Activated T-helper 2 cell treated with anti-CD3 and anti-CD28 coated beads, Interferon-gamma antibody, Interleukin-2, Interleukin-4, amounts not matched to agents 10 μg/mL and 5 μg/mL and 100 μg/mL, durations not matched to agents 14 hours and 24 hours and 36 hours (primary cell): ENCODE measurements at regions of chr7 and their contacts with region 1.

Region 1: DNA sequence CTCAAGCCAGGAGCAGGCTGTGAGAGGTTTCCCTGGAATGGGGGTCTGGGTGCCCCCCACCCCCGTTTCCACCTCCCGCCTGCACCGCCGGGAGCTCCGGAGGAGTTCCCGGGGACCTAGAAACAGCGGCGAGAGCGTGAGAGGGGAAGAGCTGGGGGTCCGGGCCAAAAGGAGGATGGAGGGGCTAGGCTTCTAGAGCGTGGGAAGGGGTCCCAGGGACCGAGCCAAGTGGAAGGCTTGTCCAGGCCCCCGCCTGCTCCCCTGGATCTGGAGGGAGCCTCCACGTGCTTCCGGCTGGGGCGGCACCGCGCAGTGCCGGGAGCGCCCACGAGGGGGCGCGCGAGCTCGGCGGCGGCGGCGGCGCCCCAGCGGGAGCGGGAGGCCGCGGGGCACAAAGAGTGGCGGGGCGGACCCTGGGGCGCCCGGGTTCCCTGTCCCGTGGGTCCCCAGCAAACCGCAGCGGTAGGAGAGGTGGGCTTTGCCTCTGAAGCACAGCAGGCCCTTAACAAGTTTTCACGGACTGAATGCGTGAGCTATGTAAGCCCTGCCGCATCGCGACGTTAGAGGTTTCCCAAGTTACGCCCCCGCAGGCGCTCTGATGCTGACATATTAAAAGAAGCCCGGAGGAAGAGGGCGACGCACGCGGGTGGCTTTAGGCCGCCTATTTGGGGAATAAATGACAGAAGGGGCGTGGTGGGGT is 104.4 kb upstream of the LRRC4 start:
- DNase-seq: peak; percentile 51
- H3K4me3 Mint-ChIP-seq: peak overlapping the region; percentile 68
- H3K27ac Mint-ChIP-seq: peak overlapping the region; percentile 14
- H3K4me1 Mint-ChIP-seq: peaks cover 7% of the 10 kb centered on the region
- H3K27me3 Mint-ChIP-seq: peaks cover 55% of the 10 kb centered on the region

Region 2: GRCh38 chr7:127708788-127709187 is 426.9 kb before region 1 on chr7:
- intact Hi-C with region 1: loop called (anchors 1 kb)
- DNase-seq: peak; percentile 35
- H3K4me3 Mint-ChIP-seq: no peak overlapping the region
- H3K27ac Mint-ChIP-seq: no peak overlapping the region
- H3K4me1 Mint-ChIP-seq: peaks cover 6% of the 10 kb centered on the region
- H3K27me3 Mint-ChIP-seq: no peaks in the 10 kb centered on the region

Region 3: GRCh38 chr7:127858091-127858914 is 277.4 kb before region 1 on chr7:
- intact Hi-C with region 1: no loop called
- DNase-seq: no peak
- H3K4me3 Mint-ChIP-seq: no peak overlapping the region
- H3K27ac Mint-ChIP-seq: peak overlapping the region; percentile 15
- H3K4me1 Mint-ChIP-seq: peaks cover 46% of the 10 kb centered on the region
- H3K27me3 Mint-ChIP-seq: no peaks in the 10 kb centered on the region

Region 4: DNA sequence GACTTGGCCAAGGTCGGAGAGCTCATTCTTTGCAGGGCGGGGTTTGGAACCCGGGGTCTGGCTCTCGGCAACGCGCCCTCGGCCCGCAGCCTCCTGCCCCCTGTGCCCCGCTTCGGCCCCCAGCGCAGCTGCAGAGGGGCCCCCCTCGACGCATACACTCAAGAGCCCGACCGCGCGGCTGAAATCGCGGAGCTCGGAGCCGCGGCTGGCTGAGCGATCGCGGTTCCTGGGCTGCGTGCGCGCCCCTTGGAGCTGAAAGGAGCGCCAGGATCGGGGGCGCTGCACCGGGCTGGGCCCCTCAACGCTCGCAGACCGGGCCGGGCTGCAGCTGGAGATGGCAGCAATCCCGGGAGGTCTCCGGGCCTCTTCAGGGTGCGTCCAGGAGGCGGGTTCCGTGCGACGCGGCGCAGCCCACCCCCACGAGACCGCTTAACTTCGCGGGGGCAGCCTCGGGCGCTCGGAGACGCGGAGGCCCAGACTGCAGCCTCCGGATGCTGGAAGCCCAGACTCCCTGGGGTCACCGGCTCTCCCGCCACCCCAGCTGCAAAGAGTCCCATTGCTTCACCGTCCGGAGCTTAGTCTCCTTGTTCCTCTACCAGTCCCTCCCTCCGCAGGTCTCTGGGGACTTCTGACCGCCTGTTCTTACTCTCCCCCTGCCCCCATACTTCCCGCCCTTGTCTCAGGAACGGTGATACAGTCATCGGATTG is 31.5 kb before region 1 on chr7:
- intact Hi-C with region 1: loop called (anchors 5 kb)
- DNase-seq: no peak
- H3K4me3 Mint-ChIP-seq: peak overlapping the region; percentile 84
- H3K27ac Mint-ChIP-seq: no peak overlapping the region
- H3K4me1 Mint-ChIP-seq: peaks cover 28% of the 10 kb centered on the region
- H3K27me3 Mint-ChIP-seq: peaks cover 10% of the 10 kb centered on the region

Region 5: DNA sequence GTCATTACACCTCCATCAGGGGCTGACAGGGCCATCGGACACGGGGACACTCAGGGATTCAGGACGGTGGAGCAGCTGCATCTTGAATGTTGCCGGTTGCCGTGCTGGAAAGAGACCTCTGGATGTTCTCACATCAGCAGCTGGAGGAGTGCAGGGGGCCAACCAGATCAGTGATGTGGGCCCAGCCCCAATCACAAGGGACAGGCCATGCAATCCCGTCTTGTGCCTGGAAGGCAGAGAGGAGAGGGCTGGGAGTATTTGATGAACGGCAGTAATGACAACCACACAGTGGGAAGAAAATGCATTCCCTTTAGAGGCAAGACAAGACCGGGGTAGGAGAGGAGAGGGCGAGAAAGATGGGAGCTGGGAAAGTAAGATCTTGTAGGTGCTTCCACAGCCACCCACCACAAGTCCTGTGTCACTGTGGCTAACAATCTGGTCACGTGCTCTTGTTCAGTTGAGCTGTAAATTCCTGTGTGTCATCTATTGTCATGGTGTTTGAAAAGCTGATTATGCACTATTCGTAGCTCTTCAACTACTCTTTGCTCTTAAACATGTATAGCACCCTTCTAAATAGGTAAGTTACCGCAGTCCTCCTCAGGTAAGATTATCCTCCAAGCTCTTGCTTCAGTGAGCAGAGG is 19.6 kb after region 1 on chr7:
- intact Hi-C with region 1: no loop called
- DNase-seq: no peak
- H3K4me3 Mint-ChIP-seq: no peak overlapping the region
- H3K27ac Mint-ChIP-seq: no peak overlapping the region
- H3K4me1 Mint-ChIP-seq: no peaks in the 10 kb centered on the region
- H3K27me3 Mint-ChIP-seq: peaks cover 32% of the 10 kb centered on the region

Region 6: DNA sequence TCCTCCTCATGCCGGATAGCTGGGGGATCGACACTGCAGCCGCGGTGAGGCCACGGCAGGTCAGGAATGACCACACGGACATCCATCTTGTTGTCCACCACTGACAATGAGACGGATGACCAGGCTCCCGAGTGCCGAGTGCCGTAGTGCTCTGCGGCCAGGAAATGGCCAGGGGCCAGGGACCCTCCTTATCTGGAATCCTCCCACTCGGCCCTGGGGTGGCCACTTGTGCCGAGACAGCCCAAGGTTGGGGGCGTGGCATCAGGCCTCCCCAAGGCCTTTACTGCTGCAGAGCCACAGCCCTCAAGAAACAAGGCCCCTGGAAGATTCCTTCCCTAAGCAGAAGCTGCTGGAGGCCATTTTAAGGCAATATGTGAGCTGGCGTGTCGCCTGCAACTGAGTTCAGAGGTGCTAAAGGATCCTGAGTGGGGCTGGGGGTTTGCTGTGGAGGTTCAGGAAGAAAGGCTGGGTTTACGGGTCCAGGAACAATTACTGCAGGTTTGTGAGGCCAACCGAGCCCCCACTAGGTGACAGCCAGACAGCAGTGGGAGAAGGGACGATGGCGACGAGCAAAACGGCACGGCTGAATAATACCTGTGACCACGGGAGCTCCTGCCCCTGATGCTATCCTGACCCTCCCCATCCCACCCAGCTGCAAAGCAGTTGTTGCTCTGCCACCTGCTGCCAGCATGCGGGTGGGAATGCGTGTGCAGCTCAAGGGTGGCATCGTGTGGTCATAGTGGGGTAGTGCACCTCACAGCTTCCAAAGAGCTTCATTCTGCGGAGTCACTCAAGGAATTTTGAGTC is 73.8 kb after region 1 on chr7:
- intact Hi-C with region 1: loop called (anchors 1 kb)
- DNase-seq: peak; percentile 51
- H3K4me3 Mint-ChIP-seq: no peak overlapping the region
- H3K27ac Mint-ChIP-seq: no peak overlapping the region
- H3K4me1 Mint-ChIP-seq: no peaks in the 10 kb centered on the region
- H3K27me3 Mint-ChIP-seq: peaks cover 16% of the 10 kb centered on the region